ENCODE measurements at regions of chr13 and their contacts with region 1.

Region 1: DNA sequence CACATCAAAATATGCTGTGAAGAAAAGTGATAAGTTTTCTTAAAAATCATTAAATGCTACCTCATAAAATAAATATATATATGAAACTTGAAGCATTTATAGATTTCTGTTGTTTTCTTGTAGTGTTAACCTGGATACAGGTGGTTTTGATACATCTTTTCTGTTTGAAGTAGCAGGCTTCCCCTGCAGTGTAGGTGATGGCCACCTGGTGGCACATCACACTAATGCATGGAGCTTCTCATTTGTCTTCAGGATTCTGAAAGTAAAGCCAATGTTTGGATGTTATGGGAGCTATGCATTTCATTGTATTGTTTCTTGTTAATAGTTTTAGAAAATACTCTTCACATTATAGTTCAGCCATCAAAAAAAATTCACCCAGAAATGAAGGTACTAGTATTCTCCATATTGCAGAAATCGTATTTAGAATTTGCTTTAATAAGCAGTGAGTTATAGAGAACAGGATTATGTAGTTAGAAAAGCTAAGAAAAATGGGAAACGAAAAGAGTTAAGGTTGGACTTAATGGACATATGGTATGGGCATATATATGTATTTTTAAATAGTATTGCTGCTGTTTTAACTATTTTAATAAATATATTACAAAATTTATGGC is 18.7 kb downstream of the GPR180 start:
- DNase-seq: peak in 10 of 35 experiments; percentile 4 to 46 (median 18)
- ATAC-seq: peak in 3 of 4 experiments; percentile 56 to 70 (median 67)
- H3K4me3 ChIP-seq: no peak overlapping the region
- H3K4me3 Mint-ChIP-seq: no peak overlapping the region
- H3K27ac ChIP-seq: no peak overlapping the region
- H3K27ac Mint-ChIP-seq: no peak overlapping the region
- H3K4me1 ChIP-seq: peaks cover 0 to 6% of the 10 kb centered on the region in 2 experiments
- H3K4me1 Mint-ChIP-seq: peaks cover 6 to 12% (median 10%) of the 10 kb centered on the region in 3 donors
- H3K27me3 ChIP-seq: no peaks in the 10 kb centered on the region
- H3K27me3 Mint-ChIP-seq: no peaks in the 10 kb centered on the region

Region 2: DNA sequence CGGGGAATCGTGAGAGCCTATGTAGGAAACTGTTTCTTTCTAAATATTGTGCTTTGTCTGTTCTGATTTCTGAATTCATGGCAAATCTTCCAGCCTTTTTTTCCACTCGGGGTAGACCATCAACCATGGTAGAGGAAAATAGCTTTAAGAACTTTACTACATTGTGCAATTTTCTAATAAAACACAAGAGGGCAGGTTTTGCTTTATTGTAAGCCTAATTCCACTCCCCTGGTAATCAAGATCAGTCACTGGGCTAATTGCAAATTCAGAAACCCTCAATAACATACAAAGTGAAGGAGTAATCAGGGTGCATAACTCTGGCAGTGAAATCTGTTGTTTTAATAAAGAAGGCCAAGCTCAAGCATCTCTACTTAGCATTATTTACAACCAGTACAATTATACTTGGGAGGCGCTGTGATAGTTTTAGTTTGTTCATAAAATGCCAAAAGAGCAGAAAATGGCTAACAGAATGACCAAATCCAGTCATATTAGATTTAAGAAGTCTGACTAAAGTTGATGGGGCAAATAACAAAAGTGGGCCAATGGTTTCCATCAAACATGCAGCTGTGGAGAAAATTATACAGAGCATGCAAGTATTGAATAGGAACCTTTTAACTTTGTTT is 184.7 kb before region 1 on chr13:
- CTCF ChIA-PET with region 1: interaction called, 232 to 267 read pairs
- POLR2A ChIA-PET with region 1: interaction called in 1 of 2 experiments, 3 read pairs
- DNase-seq: peak in 2 of 35 experiments; percentile 7 to 65
- ATAC-seq: peak; percentile 43 to 74 (median 69)
- H3K4me3 ChIP-seq: no peak overlapping the region
- H3K4me3 Mint-ChIP-seq: no peak overlapping the region
- H3K27ac ChIP-seq: no peak overlapping the region
- H3K27ac Mint-ChIP-seq: no peak overlapping the region
- H3K4me1 ChIP-seq: no peaks in the 10 kb centered on the region
- H3K4me1 Mint-ChIP-seq: peaks cover 0 to 4% (median 2%) of the 10 kb centered on the region in 3 donors
- H3K27me3 ChIP-seq: no peaks in the 10 kb centered on the region
- H3K27me3 Mint-ChIP-seq: no peaks in the 10 kb centered on the region

Region 3: GRCh38 chr13:94595950-94596574 is 24.3 kb before region 1 on chr13 and contains the start of gene TGDS:
- CTCF ChIA-PET with region 1: interaction called, 3 to 18 read pairs
- POLR2A ChIA-PET with region 1: no interaction called
- DNase-seq: peak; percentile 74 to 93 (median 86)
- ATAC-seq: peak; percentile 96 to 97 (median 96)
- H3K4me3 ChIP-seq: peak within 1 kb of the TSS; percentile 96 to 99
- H3K4me3 Mint-ChIP-seq: peak within 1 kb of the TSS; percentile 88 to 95 (median 94)
- H3K27ac ChIP-seq: peak within 1 kb of the TSS; percentile 77
- H3K27ac Mint-ChIP-seq: peak within 1 kb of the TSS; percentile 90 to 95
- H3K4me1 ChIP-seq: peaks cover 22 to 28% of the 10 kb centered on the region in 2 experiments
- H3K4me1 Mint-ChIP-seq: peaks cover 40 to 41% (median 40%) of the 10 kb centered on the region in 3 donors
- H3K27me3 ChIP-seq: no peaks in the 10 kb centered on the region
- H3K27me3 Mint-ChIP-seq: no peaks in the 10 kb centered on the region
- total RNA-seq, gene TGDS: 5.6 to 16.4 (median 12.9) TPM

Region 4: GRCh38 chr13:94632227-94632980 is 12.0 kb after region 1 on chr13:
- CTCF ChIA-PET with region 1: interaction called, 7 to 11 read pairs
- POLR2A ChIA-PET with region 1: no interaction called
- DNase-seq: no peak
- ATAC-seq: no peak
- H3K4me3 ChIP-seq: no peak overlapping the region
- H3K4me3 Mint-ChIP-seq: no peak overlapping the region
- H3K27ac ChIP-seq: no peak overlapping the region
- H3K27ac Mint-ChIP-seq: no peak overlapping the region
- H3K4me1 ChIP-seq: no peaks in the 10 kb centered on the region
- H3K4me1 Mint-ChIP-seq: no peaks in the 10 kb centered on the region
- H3K27me3 ChIP-seq: no peaks in the 10 kb centered on the region
- H3K27me3 Mint-ChIP-seq: no peaks in the 10 kb centered on the region

Region 5: GRCh38 chr13:94656176-94656575 is 35.8 kb after region 1 on chr13:
- CTCF ChIA-PET with region 1: no interaction called
- POLR2A ChIA-PET with region 1: no interaction called
- DNase-seq: no peak
- ATAC-seq: no peak
- H3K4me3 ChIP-seq: no peak overlapping the region
- H3K4me3 Mint-ChIP-seq: no peak overlapping the region
- H3K27ac ChIP-seq: no peak overlapping the region
- H3K27ac Mint-ChIP-seq: no peak overlapping the region
- H3K4me1 ChIP-seq: no peaks in the 10 kb centered on the region
- H3K4me1 Mint-ChIP-seq: peaks cover 0 to 2% (median 0%) of the 10 kb centered on the region in 3 donors
- H3K27me3 ChIP-seq: no peaks in the 10 kb centered on the region
- H3K27me3 Mint-ChIP-seq: peaks cover 3 to 5% of the 10 kb centered on the region in 2 donors

Region 6: DNA sequence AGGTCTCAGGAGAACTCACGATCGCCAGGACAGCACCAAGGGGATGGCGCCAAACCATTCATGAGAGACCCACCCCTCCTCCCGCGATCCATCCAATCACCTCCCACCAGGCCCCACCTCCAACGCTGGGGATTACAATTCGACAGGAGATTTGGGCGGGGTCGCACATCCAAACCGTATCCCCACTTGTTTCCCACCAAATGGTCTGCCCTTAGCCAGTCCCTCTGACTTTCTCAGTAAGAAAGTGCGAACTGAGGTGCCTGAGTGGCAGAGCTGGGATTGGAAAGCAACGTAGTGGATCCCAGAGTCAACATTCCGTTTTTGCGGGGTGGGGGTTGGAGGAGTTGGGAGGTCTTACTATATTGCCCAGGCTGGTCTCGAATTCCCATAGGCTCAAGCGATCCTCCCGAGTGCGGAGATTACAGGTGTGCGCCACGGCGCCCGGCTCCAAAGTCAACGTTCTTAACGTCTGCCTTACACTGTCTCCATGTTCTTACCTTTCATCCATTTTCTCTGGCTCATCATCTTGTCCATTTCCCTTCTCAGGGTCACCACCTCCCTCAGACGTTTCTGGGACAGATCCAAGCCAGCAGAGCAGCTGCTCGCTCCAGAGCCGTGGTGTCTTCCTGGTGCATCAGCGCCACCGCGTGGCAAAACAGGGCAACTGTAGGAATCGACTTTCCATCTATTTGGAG is 783.6 kb after region 1 on chr13:
- CTCF ChIA-PET with region 1: interaction called, 4 to 11 read pairs
- POLR2A ChIA-PET with region 1: no interaction called
- DNase-seq: peak; percentile 45 to 85 (median 67)
- ATAC-seq: peak; percentile 81 to 94 (median 93)
- H3K4me3 ChIP-seq: peak overlapping the region; percentile 39 to 59
- H3K4me3 Mint-ChIP-seq: peak overlapping the region; percentile 74 to 86 (median 82)
- H3K27ac ChIP-seq: no peak overlapping the region
- H3K27ac Mint-ChIP-seq: peak overlapping the region in 1 of 2 donors; percentile 50
- H3K4me1 ChIP-seq: peaks cover 0 to 7% of the 10 kb centered on the region in 2 experiments
- H3K4me1 Mint-ChIP-seq: peaks cover 8 to 11% (median 10%) of the 10 kb centered on the region in 3 donors
- H3K27me3 ChIP-seq: peaks cover 0 to 20% of the 10 kb centered on the region in 2 experiments
- H3K27me3 Mint-ChIP-seq: peaks cover 5 to 7% of the 10 kb centered on the region in 2 donors

Measured in T-cell (primary cell).